AG04450 (cell line): ENCODE measurements at regions of chr12 and their contacts with region 1.

Region 1: GRCh38 chr12:111298582-111299436 is 70.1 kb downstream of the PHETA1 start:
- DNase-seq: peak; percentile 6
- H3K4me3 ChIP-seq: no peak overlapping the region
- H3K27ac ChIP-seq: no peak overlapping the region
- H3K27me3 ChIP-seq: peaks cover 3% of the 10 kb centered on the region
- CTCF ChIP-seq: peak; percentile 87

Region 2: DNA sequence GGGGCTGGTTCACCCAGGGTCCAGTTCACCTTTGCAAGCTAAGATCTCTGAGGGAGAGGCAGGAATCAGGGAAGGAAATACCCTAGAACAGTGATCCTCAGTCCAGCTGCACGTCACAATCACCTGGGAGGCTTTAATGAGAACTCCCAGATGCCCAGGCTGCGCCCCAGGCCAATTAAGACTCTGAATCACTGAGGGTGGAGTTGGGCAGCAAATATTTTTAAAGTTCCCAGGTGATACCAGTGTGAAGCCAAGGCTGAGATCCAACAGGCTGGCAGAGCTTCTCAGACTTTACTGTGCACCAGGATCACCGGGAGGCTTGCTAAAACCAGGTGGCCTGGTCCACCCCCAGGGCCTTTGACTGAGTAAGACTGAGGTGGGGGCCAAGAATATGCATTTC is 402.2 kb before region 1 on chr12:
- CTCF ChIA-PET with region 1: interaction called, 23 read pairs
- POLR2A ChIA-PET with region 1: no interaction called
- DNase-seq: no peak
- H3K4me3 ChIP-seq: no peak overlapping the region
- H3K27ac ChIP-seq: no peak overlapping the region
- H3K27me3 ChIP-seq: peaks cover 4% of the 10 kb centered on the region
- CTCF ChIP-seq: no peak

Region 3: GRCh38 chr12:110937104-110937641 is 361.6 kb before region 1 on chr12:
- CTCF ChIA-PET with region 1: interaction called, 26 read pairs
- POLR2A ChIA-PET with region 1: no interaction called
- DNase-seq: no peak
- H3K4me3 ChIP-seq: no peak overlapping the region
- H3K27ac ChIP-seq: no peak overlapping the region
- H3K27me3 ChIP-seq: no peaks in the 10 kb centered on the region
- CTCF ChIP-seq: peak; percentile 85

Region 4: GRCh38 chr12:111024205-111024801 is 274.5 kb before region 1 on chr12:
- CTCF ChIA-PET with region 1: interaction called, 11 read pairs
- POLR2A ChIA-PET with region 1: no interaction called
- DNase-seq: no peak
- H3K4me3 ChIP-seq: no peak overlapping the region
- H3K27ac ChIP-seq: no peak overlapping the region
- H3K27me3 ChIP-seq: peaks cover 4% of the 10 kb centered on the region
- CTCF ChIP-seq: peak; percentile 58

Region 5: GRCh38 chr12:111285200-111285599 is 13.6 kb before region 1 on chr12:
- CTCF ChIA-PET with region 1: interaction called, 10 read pairs
- POLR2A ChIA-PET with region 1: no interaction called
- DNase-seq: no peak
- H3K4me3 ChIP-seq: no peak overlapping the region
- H3K27ac ChIP-seq: no peak overlapping the region
- H3K27me3 ChIP-seq: peaks cover 7% of the 10 kb centered on the region
- CTCF ChIP-seq: no peak

Region 6: GRCh38 chr12:111313833-111314259 is 15.0 kb after region 1 on chr12:
- CTCF ChIA-PET with region 1: interaction called, 31 read pairs
- POLR2A ChIA-PET with region 1: no interaction called
- DNase-seq: peak; percentile 23
- H3K4me3 ChIP-seq: no peak overlapping the region
- H3K27ac ChIP-seq: no peak overlapping the region
- H3K27me3 ChIP-seq: peaks cover 6% of the 10 kb centered on the region
- CTCF ChIP-seq: peak; percentile 91

Region 7: GRCh38 chr12:111444925-111445725 is 146.3 kb after region 1 on chr12:
- CTCF ChIA-PET with region 1: no interaction called
- POLR2A ChIA-PET with region 1: no interaction called
- DNase-seq: no peak
- H3K4me3 ChIP-seq: no peak overlapping the region
- H3K27ac ChIP-seq: peak overlapping the region; percentile 52
- H3K27me3 ChIP-seq: no peaks in the 10 kb centered on the region
- CTCF ChIP-seq: no peak